GM12878 (cell line): ENCODE measurements at regions of chr7 and their contacts with region 1.

Region 1: GRCh38 chr7:46682836-46683624 is 762.0 kb upstream of the IGFBP3 start:
- DNase-seq: no peak
- ATAC-seq: peak; percentile 76
- H3K4me3 ChIP-seq: no peak overlapping the region
- H3K27ac ChIP-seq: no peak overlapping the region
- H3K4me1 ChIP-seq: no peaks in the 10 kb centered on the region
- H3K27me3 ChIP-seq: no peaks in the 10 kb centered on the region
- CTCF ChIP-seq: no peak
- EP300 ChIP-seq: no peak
- POLR2A ChIP-seq: no peak
- RAD21 ChIP-seq: no peak

Region 2: DNA sequence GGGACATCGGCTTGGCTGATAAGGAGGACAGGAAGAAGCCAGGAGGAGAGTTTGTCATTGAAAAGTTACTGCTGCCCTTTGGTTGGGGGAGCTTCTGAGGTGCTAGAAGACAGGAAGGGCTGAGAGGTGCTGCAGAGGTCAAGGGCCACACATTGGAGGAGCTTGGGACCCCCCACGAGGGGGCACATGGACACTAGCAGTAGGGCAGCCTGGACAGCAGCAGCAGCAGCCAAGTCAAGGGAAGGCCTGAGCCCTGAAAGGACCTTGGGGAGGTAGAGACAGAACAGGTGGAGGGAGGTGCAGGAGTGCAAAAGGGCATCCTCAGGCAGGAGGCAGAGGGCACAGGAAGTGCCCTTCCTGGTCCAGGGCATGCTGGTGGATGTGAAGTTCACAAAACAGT is 322.2 kb before region 1 on chr7:
- CTCF ChIA-PET with region 1: no interaction called
- POLR2A ChIA-PET with region 1: no interaction called
- RAD21 ChIA-PET with region 1: interaction called, 6 read pairs
- SMC1A ChIA-PET with region 1: interaction called, 13 read pairs
- in situ Hi-C with region 1: no loop called
- intact Hi-C with region 1: no loop called
- DNase-seq: no peak
- ATAC-seq: no peak; the same call in 2 of the 3 replicates
- H3K4me3 ChIP-seq: no peak overlapping the region
- H3K27ac ChIP-seq: no peak overlapping the region
- H3K4me1 ChIP-seq: no peaks in the 10 kb centered on the region
- H3K27me3 ChIP-seq: no peaks in the 10 kb centered on the region
- CTCF ChIP-seq: peak in 1 of 3 experiments; percentile 14; a peak in 1 of 6 replicates
- EP300 ChIP-seq: no peak
- POLR2A ChIP-seq: no peak
- RAD21 ChIP-seq: peak; percentile 24; the same call in 1 of the 2 replicates

Region 3: DNA sequence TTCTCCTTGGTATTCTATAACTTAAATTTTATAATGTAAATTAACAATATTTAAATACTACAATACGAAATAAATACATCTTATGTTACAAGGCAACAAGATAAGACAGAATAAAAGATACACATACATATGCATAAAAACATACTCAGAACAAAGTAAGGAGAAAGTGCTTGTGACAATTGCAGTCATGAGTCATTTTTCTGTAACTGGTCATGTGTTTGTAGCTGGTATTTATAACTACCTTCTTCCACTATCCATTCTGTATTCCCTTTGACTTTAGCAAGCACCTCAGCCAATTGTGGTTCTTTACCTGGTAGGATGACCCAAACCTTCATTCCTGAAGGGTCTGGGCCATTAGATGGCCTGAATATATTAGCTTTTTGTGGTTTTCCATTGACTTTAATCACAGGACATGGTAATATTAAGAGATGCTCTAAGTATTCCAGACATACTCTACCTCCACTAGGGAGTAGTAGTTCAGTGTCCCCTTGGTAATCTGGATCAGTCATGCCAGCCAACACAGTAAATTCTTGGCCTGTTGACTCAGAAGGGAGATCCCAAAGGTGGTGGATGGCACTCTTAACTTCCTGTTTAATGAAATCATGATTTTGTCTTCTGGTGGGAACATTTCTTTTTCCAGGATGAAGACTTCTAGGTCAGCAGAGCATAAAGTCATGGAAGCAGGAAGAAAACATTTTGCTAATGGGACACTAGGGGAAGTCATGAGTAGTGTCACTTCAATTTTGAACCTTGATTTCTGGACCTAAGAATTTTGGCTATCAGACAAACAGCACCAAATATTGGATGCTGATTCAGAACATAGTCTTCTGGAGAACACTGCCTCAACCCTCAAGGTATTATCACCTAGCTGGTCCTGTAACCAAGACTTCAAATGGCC is 28.2 kb before region 1 on chr7:
- CTCF ChIA-PET with region 1: interaction called, 19 read pairs
- POLR2A ChIA-PET with region 1: interaction called, 3 read pairs
- RAD21 ChIA-PET with region 1: interaction called, 25 read pairs
- SMC1A ChIA-PET with region 1: interaction called, 106 read pairs
- in situ Hi-C with region 1: no loop called
- intact Hi-C with region 1: no loop called
- DNase-seq: no peak
- ATAC-seq: no peak
- H3K4me3 ChIP-seq: no peak overlapping the region
- H3K27ac ChIP-seq: no peak overlapping the region
- H3K4me1 ChIP-seq: no peaks in the 10 kb centered on the region
- H3K27me3 ChIP-seq: no peaks in the 10 kb centered on the region
- CTCF ChIP-seq: no peak
- EP300 ChIP-seq: no peak
- POLR2A ChIP-seq: no peak
- RAD21 ChIP-seq: no peak

Region 4: GRCh38 chr7:46660402-46660980 is 22.5 kb before region 1 on chr7:
- CTCF ChIA-PET with region 1: interaction called, 7 read pairs
- POLR2A ChIA-PET with region 1: interaction called, 7 read pairs
- RAD21 ChIA-PET with region 1: interaction called, 19 read pairs
- SMC1A ChIA-PET with region 1: interaction called, 106 read pairs
- in situ Hi-C with region 1: no loop called
- intact Hi-C with region 1: no loop called
- DNase-seq: no peak
- ATAC-seq: peak; percentile 28
- H3K4me3 ChIP-seq: no peak overlapping the region
- H3K27ac ChIP-seq: no peak overlapping the region
- H3K4me1 ChIP-seq: no peaks in the 10 kb centered on the region
- H3K27me3 ChIP-seq: no peaks in the 10 kb centered on the region
- CTCF ChIP-seq: no peak
- EP300 ChIP-seq: peak in 1 of 2 experiments; percentile 68; a peak in 1 of 4 replicates
- POLR2A ChIP-seq: no peak
- RAD21 ChIP-seq: no peak

Region 5: DNA sequence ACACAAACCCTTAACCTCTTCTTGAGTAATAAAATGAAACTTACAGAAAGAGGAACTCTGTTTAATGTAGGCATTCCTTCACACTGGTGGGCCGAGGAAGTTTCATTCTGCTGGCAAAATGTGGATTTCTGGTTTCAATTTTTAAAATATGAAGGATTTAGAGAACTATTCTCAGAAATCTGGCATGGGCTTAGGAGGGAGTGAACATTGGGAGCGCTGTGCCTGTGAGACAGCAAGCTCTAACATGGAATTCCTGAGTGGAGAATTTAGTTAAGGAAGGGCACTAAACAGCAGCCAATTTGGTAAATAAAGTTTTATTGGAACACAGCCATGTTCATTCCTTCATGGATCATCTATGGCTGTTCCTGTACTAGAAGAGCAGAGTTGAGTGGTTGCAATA is 10.2 kb before region 1 on chr7:
- CTCF ChIA-PET with region 1: interaction called, 8 read pairs
- POLR2A ChIA-PET with region 1: interaction called, 3 read pairs
- RAD21 ChIA-PET with region 1: interaction called, 7 read pairs
- SMC1A ChIA-PET with region 1: interaction called, 106 read pairs
- in situ Hi-C with region 1: no loop called
- intact Hi-C with region 1: no loop called
- DNase-seq: no peak
- ATAC-seq: no peak
- H3K4me3 ChIP-seq: no peak overlapping the region
- H3K27ac ChIP-seq: no peak overlapping the region
- H3K4me1 ChIP-seq: no peaks in the 10 kb centered on the region
- H3K27me3 ChIP-seq: no peaks in the 10 kb centered on the region
- CTCF ChIP-seq: no peak
- EP300 ChIP-seq: no peak
- POLR2A ChIP-seq: no peak
- RAD21 ChIP-seq: no peak

Region 6: GRCh38 chr7:46695051-46695707 is 12.1 kb after region 1 on chr7:
- CTCF ChIA-PET with region 1: interaction called, 8 read pairs
- POLR2A ChIA-PET with region 1: interaction called, 19 read pairs
- RAD21 ChIA-PET with region 1: interaction called, 12 read pairs
- SMC1A ChIA-PET with region 1: interaction called, 68 read pairs
- in situ Hi-C with region 1: no loop called
- intact Hi-C with region 1: no loop called
- DNase-seq: no peak
- ATAC-seq: peak; percentile 62
- H3K4me3 ChIP-seq: no peak overlapping the region
- H3K27ac ChIP-seq: no peak overlapping the region
- H3K4me1 ChIP-seq: no peaks in the 10 kb centered on the region
- H3K27me3 ChIP-seq: no peaks in the 10 kb centered on the region
- CTCF ChIP-seq: no peak
- EP300 ChIP-seq: no peak
- POLR2A ChIP-seq: no peak
- RAD21 ChIP-seq: no peak